Tibial artery (tissue), 4 donors: ENCODE measurements at regions of chr16 and their contacts with region 1.

Region 1: GRCh38 chr16:88941913-88942909 is 34.8 kb downstream of the CBFA2T3 start:
- DNase-seq: no peak
- H3K4me3 ChIP-seq: peak overlapping the region; percentile 38 to 52
- H3K27ac ChIP-seq: no peak overlapping the region
- H3K4me1 ChIP-seq: peaks cover 0 to 31% (median 18%) of the 10 kb centered on the region in 4 donors
- H3K27me3 ChIP-seq: peaks cover 0 to 72% of the 10 kb centered on the region in 2 donors
- CTCF ChIP-seq: peak; percentile 40 to 44

Region 2: DNA sequence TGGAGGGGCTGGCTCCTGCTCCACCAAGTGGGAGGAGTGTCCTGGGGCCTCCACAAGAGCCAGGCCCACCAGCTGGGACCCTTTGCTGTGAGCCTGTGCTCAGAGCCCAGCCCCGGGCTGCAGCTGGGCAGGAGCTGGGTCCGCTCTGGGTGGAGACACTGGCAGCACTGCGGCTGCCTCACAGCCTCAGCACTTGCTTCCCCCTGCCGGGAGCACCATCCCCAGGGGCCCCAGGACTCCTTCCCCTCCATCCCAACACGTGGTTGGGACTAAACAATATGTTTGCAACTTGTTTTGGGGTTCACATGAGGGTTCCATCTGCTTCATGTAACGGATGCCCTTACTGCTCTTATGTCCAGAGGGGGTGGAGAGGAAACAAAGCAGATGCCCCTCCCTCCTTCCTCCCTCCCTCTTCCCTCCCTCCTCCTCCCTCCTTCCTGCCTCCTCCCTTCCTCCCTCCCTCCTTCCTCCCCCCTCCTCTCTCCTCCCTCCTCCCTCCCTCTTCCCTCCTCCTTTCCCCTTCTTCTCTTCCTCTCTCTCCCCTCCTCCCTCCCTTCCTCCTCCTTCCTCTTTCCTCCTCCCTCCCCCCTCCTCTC is 51.1 kb after region 1 on chr16:
- intact Hi-C with region 1: loop called (anchors 10 kb)
- DNase-seq: no peak
- H3K4me3 ChIP-seq: no peak overlapping the region
- H3K27ac ChIP-seq: no peak overlapping the region
- H3K4me1 ChIP-seq: no peaks in the 10 kb centered on the region
- H3K27me3 ChIP-seq: peaks cover 0 to 74% of the 10 kb centered on the region in 2 donors
- CTCF ChIP-seq: no peak

Region 3: GRCh38 chr16:89006036-89006752 is 64.0 kb after region 1 on chr16:
- intact Hi-C with region 1: no loop called
- DNase-seq: peak; percentile 13 to 44
- H3K4me3 ChIP-seq: no peak overlapping the region
- H3K27ac ChIP-seq: no peak overlapping the region
- H3K4me1 ChIP-seq: no peaks in the 10 kb centered on the region
- H3K27me3 ChIP-seq: peaks cover 0 to 63% of the 10 kb centered on the region in 2 donors
- CTCF ChIP-seq: no peak

Region 4: GRCh38 chr16:89217388-89218191 is 275.4 kb after region 1 on chr16 and contains the start of gene ZNF778:
- intact Hi-C with region 1: loop called (anchors 10 kb)
- DNase-seq: peak; percentile 84 to 91
- H3K4me3 ChIP-seq: peak within 1 kb of the TSS; percentile 74 to 84
- H3K27ac ChIP-seq: peak within 1 kb of the TSS; percentile 88 to 95
- H3K4me1 ChIP-seq: peaks cover 0 to 28% (median 19%) of the 10 kb centered on the region in 4 donors
- H3K27me3 ChIP-seq: no peaks in the 10 kb centered on the region
- CTCF ChIP-seq: no peak